ENCODE measurements at regions of chr18 and their contacts with region 1.

Region 1: DNA sequence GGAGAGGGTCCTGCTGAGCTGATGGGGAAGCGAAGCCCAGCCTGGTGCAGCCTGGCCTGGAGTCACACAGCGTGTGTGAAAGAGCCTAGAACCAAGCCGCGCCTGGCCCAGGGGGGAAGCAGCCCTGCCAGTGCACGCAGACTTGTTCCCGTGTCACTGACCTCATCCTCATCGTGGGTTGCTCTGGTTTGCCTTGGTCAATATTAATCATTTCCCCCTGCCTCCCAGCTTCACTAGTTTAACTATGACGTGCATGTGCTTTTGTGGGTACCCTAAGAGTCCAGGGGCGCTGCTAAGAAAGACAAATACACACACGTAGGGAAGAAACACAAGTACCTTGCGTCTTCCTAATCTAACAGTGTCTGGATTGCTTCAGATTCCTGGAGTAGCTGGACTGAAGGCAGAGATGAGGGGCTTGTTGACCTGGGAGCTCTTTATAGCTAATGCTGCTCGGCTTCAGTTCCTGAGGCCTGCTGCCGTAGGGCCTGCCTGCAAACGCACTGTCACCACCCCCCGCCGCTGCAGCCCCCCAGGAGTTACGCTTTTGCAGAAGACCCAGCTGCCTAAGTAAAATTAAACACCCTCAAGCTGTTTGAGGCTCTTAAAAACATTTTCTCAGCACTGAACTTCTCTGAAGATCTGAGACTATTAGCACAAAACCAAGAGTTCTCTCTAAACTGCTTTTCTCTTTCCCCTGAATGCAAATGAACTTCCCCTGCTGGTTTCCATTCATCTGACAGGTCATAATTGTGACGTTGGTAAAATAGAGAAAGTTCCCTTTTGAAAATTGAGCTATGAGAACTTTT is 159.2 kb downstream of the FAM210A start:
- DNase-seq: peak; percentile 79
- CTCF ChIP-seq: no peak

Region 2: DNA sequence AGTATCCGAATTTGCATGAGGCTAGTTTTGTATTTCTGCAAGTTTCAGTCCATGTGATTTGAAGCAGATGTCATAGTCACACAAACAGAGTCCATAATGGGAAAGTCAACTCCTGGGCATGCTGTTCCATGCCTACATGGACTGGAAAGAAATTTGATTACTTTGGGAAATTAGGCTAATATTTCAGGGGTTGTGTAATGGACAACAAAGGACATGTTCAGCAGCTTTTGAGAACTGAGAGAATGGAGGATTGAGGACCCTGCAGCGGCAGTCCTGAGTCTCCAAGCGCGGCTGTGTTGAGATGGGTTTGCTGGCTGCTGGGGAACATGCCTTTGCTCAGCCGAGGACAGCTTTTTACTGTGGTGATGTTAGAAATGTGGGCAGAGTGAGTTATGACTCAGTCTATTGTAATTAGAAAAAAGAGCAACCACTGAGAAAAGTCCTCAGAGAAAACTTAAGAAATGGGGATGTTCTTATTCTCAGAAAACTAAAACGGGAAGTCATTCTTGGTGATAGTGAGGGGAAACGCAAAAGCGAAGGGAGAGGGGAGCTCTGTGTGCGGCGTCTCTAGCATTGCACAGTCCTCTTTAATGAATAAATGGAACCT is 10.1 kb after region 1 on chr18:
- CTCF ChIA-PET with region 1: interaction called, 8 read pairs
- POLR2A ChIA-PET with region 1: interaction called, 55 read pairs
- DNase-seq: peak; percentile 74
- CTCF ChIP-seq: no peak

Region 3: DNA sequence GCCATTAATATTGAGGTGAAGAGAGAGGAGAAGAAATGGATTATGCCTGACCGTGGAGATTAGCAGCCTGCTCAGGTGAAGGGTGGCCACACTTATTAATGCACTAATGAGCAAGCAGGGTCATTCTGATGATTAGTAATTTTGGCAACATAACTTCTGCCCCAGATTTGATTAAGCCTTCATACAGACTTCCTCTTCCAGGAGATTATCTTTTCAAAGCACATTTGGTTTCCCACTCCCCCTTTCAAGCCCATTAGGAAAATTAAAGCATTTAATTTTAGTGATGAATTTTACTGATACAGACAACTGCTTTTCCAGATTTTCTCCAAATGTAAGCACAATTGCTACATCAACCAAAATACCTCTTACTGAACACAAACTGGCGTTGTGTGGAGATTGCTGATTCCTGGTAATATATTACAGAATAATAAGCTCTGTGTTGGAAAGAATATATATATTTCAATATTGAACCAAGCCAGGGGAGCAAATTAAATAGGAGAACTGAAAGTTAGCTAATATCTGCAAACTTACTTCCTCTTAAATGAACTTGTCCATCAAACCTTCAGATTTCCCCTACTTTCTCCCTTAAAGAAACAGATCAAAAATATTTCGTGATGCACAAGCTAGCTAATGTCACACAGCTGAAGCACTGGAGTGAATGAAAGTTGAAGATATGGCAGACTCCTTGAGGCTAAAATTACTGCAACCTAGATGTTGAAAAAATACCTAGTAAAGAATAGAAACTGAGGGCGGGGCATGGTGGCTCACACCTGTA is 18.4 kb after region 1 on chr18:
- CTCF ChIA-PET with region 1: interaction called, 13 read pairs
- POLR2A ChIA-PET with region 1: interaction called, 16 read pairs
- DNase-seq: peak; percentile 57
- CTCF ChIP-seq: no peak

Measured in GM10248 (cell line).